ENCODE measurements at regions of chr1 and their contacts with region 1.

Region 1: DNA sequence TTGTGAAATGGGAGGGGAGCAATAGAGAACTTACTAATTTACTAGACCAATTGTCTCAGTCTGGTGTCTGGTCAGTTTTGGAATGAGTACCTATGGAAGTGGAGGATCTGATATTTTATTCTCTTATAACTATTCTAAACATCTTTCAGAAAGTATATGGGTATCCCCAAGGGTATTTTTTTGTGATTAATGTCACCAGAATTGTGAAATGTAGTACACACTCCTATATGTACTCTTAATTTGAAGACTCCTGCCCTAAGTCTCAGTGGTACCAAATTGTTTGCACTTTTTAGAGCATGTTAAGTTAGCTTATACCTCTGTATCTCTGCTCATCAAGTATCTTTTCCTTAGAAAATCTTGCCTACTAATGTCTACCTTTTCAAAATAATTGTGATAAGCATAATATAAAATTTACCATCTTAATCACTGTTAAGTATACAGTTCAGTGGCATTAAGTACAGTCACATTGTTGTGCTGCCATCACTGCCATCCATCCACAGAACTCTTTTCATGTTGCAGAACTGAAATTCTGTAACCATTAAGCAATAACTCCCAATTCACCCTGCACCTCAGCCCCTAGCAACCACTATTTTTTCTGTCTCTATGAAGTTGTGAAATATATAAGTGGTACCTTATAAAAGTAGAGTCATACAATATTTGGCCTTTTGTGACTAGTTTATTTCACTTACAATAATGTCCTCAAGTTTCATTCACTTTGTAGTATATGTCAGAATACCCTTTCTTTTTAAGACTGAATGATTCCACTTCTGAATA is 40.5 kb downstream of the SLC30A7 start:
- DNase-seq: no peak
- ATAC-seq: no peak
- H3K4me3 ChIP-seq: no peak overlapping the region
- H3K27ac ChIP-seq: no peak overlapping the region
- H3K4me1 ChIP-seq: no peaks in the 10 kb centered on the region
- H3K27me3 ChIP-seq: no peaks in the 10 kb centered on the region
- CTCF ChIP-seq: no peak

Region 2: GRCh38 chr1:100950781-100951180 is 14.4 kb after region 1 on chr1:
- intact Hi-C with region 1: loop called in 1 of 2 experiments (anchors 2 kb)
- DNase-seq: no peak
- ATAC-seq: no peak
- H3K4me3 ChIP-seq: no peak overlapping the region
- H3K27ac ChIP-seq: no peak overlapping the region
- H3K4me1 ChIP-seq: peaks cover 6% of the 10 kb centered on the region
- H3K27me3 ChIP-seq: no peaks in the 10 kb centered on the region
- CTCF ChIP-seq: no peak

Measured in psoas muscle (tissue), 8 donors.